Panc1 (cell line): ENCODE measurements at regions of chr13 and their contacts with region 1.

Region 1: DNA sequence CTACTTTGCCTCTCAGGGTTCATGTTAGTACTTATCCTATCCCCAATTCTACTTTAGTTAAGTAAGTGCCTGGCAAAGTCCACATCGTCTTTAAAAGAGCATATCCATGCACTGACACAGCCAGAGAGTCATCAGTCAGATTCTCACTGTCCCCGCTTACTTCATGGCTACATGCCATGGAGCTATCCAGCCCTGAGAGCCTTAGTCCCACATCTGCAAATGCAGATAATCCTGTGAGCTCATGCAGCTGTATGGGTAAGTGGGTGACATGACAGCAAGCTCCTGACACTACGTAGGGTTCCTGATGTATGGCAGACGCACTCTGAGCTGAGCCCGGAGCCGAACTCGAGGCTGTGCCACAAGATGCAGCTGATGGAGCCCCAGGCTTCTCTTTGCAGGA is 661.5 kb downstream of the LIG4 start:
- DNase-seq: no peak
- ATAC-seq: no peak
- H3K4me3 ChIP-seq: no peak overlapping the region
- H3K27ac ChIP-seq: no peak overlapping the region
- H3K4me1 ChIP-seq: no peaks in the 10 kb centered on the region
- H3K27me3 ChIP-seq: no peaks in the 10 kb centered on the region
- CTCF ChIP-seq: no peak

Region 2: GRCh38 chr13:105665284-105665683 is 1888.6 kb before region 1 on chr13:
- CTCF ChIA-PET with region 1: no interaction called
- POLR2A ChIA-PET with region 1: no interaction called
- in situ Hi-C with region 1: no loop called
- intact Hi-C with region 1: no loop called
- DNase-seq: no peak
- ATAC-seq: no peak
- H3K4me3 ChIP-seq: no peak overlapping the region
- H3K27ac ChIP-seq: no peak overlapping the region
- H3K4me1 ChIP-seq: no peaks in the 10 kb centered on the region
- H3K27me3 ChIP-seq: no peaks in the 10 kb centered on the region
- CTCF ChIP-seq: no peak

Region 3: DNA sequence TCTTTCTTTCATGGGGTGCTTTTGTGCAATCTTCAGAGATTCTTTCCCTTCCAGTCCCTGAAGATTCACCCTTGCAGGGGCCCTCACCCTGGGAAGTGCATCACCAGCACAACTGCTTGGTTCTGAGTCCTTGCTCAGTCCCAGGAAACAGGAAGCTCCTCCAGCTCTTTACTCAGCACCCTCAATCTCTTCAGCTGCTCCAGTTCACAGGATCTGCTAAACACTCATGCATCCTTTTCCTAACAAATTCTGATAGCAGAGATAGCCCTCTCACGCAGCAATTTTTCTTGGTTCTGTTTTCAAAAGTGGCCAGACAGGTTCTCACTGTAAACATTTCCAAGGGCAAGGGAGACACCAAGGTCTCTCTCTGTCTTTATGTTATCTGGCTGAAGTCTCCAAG is 161.6 kb before region 1 on chr13:
- CTCF ChIA-PET with region 1: no interaction called
- POLR2A ChIA-PET with region 1: no interaction called
- in situ Hi-C with region 1: no loop called
- intact Hi-C with region 1: no loop called
- DNase-seq: no peak
- ATAC-seq: no peak
- H3K4me3 ChIP-seq: no peak overlapping the region
- H3K27ac ChIP-seq: no peak overlapping the region
- H3K4me1 ChIP-seq: no peaks in the 10 kb centered on the region
- H3K27me3 ChIP-seq: no peaks in the 10 kb centered on the region
- CTCF ChIP-seq: no peak

Region 4: GRCh38 chr13:108215436-108215835 is 661.6 kb after region 1 on chr13 and contains the start of gene LIG4:
- CTCF ChIA-PET with region 1: no interaction called
- POLR2A ChIA-PET with region 1: interaction called, 13 read pairs
- in situ Hi-C with region 1: no loop called
- intact Hi-C with region 1: no loop called
- DNase-seq: peak; percentile 32
- ATAC-seq: peak; percentile 83
- H3K4me3 ChIP-seq: peak within 1 kb of the TSS; percentile 45 to 82
- H3K27ac ChIP-seq: peak within 1 kb of the TSS; percentile 93
- H3K4me1 ChIP-seq: peaks cover 15% of the 10 kb centered on the region; the same call in 1 of the 2 replicates
- H3K27me3 ChIP-seq: no peaks in the 10 kb centered on the region
- CTCF ChIP-seq: no peak
- total RNA-seq, gene LIG4: 8.2 TPM